ENCODE measurements at regions of chr15 and their contacts with region 1.

Region 1: DNA sequence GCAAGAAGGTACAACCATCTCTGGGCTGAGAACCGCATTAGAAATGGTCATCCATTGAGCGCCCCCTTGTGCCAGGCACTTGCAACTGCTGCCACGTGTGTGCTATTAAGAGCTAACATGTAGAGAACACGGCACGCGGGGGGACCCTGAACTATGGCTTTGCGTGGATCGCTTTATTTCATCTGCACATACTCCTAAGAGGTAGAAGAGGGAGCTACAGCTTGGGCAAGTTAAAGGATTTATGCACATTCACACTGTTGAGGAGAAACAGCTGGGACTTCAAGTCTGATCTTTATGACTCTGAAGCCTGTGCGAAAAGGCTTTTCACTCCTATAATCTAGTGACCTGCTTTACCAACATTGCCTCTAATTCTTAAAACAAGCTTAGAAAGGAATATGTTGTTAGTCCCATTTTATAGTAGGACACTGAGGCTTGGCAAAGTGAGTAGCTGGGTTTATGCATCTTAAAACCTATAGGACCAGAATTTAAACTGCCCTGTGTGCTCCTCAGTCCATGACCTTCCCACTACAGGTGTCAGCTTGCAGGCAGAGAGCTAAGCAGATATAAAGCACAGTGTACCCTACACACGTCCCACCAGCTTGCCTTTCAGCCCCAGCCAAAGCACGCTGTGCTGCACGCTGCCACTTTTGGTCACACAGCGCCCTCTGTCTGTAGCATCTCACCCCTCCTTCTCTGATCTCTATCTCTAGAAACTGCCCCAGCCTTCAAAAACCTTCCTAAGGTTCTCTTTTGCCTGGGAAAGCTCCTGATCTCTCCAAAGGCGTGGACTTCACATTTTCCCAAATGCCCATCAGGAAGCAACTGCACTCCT is 57.8 kb downstream of the STARD5 start:
- DNase-seq: peak; percentile 82
- H3K4me3 ChIP-seq: peak overlapping the region; percentile 9 to 51; a peak in 2 of 4 replicates
- H3K27ac ChIP-seq: no peak overlapping the region
- H3K4me1 ChIP-seq: peaks cover 5 to 11% of the 10 kb centered on the region in 2 experiments; a peak in 2 of 4 replicates
- H3K27me3 ChIP-seq: peaks cover 10% of the 10 kb centered on the region; the same call in 1 of the 2 replicates
- CTCF ChIP-seq: peak; percentile 84
- EP300 ChIP-seq: no peak
- RAD21 ChIP-seq: peak; percentile 95

Region 2: GRCh38 chr15:80776420-80777045 is 489.6 kb before region 1 on chr15:
- CTCF ChIA-PET with region 1: interaction called, 12 read pairs
- POLR2A ChIA-PET with region 1: no interaction called
- DNase-seq: peak; percentile 76
- H3K4me3 ChIP-seq: peak overlapping the region in 1 of 2 experiments; percentile 13; a peak in 1 of 4 replicates
- H3K27ac ChIP-seq: peak overlapping the region in 1 of 2 experiments; percentile 72; a peak in 2 of 4 replicates
- H3K4me1 ChIP-seq: peaks cover 0 to 27% of the 10 kb centered on the region in 2 experiments; a peak in 3 of 4 replicates
- H3K27me3 ChIP-seq: no peaks in the 10 kb centered on the region
- CTCF ChIP-seq: peak; percentile 88
- EP300 ChIP-seq: no peak
- RAD21 ChIP-seq: peak; percentile 90

Region 3: DNA sequence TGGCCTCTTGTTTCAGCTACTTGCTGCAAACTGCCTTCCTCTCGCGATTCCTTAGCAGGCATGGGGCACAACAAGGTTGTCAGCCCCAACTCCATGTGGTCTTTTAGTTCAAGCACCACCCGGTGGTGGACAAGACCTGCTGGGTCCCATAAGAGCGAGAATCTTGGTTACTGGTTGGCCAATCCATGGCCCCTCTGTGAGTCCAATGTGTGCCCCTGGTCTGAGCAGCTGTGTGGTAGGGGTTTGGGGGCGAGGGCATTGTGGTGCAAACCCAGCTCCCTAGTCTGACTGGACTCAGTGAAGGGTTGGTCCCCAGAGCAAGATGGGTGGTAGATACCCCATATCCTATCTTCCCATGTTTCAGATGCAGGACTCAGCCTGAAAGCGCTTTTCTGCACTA is 325.3 kb before region 1 on chr15:
- CTCF ChIA-PET with region 1: no interaction called
- POLR2A ChIA-PET with region 1: no interaction called
- DNase-seq: no peak
- H3K4me3 ChIP-seq: no peak overlapping the region
- H3K27ac ChIP-seq: no peak overlapping the region
- H3K4me1 ChIP-seq: no peaks in the 10 kb centered on the region; a peak in 1 of 4 replicates
- H3K27me3 ChIP-seq: no peaks in the 10 kb centered on the region
- CTCF ChIP-seq: no peak
- EP300 ChIP-seq: no peak
- RAD21 ChIP-seq: no peak

Region 4: DNA sequence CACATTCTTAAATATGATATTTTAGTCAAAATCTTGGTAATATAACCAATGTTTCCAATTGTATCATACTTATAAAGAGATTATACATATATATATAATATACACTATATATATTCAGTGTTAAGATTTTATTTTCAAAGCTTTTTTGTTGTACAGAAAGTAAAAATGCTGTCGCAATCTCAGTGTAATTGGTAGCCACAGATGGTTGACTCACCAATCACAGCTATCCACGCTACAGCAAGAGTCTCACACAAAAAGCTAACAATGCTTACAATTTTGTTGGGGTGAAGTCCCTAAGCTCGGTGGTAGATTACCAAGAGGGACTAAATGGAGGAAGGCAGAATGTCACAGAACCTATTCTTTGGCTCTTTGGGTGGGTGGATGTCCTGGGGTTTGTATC is 149.0 kb before region 1 on chr15:
- CTCF ChIA-PET with region 1: interaction called, 451 read pairs
- POLR2A ChIA-PET with region 1: no interaction called
- DNase-seq: no peak
- H3K4me3 ChIP-seq: no peak overlapping the region
- H3K27ac ChIP-seq: no peak overlapping the region
- H3K4me1 ChIP-seq: no peaks in the 10 kb centered on the region; a peak in 1 of 4 replicates
- H3K27me3 ChIP-seq: no peaks in the 10 kb centered on the region; the same call in 1 of the 2 replicates
- CTCF ChIP-seq: no peak
- EP300 ChIP-seq: no peak
- RAD21 ChIP-seq: no peak

Region 5: GRCh38 chr15:81163961-81164800 is 102.0 kb before region 1 on chr15:
- CTCF ChIA-PET with region 1: interaction called, 395 read pairs
- POLR2A ChIA-PET with region 1: interaction called, 8 read pairs
- DNase-seq: no peak
- H3K4me3 ChIP-seq: no peak overlapping the region
- H3K27ac ChIP-seq: no peak overlapping the region
- H3K4me1 ChIP-seq: peaks cover 0 to 19% of the 10 kb centered on the region in 2 experiments; a peak in 2 of 4 replicates
- H3K27me3 ChIP-seq: no peaks in the 10 kb centered on the region
- CTCF ChIP-seq: 0 out of 2 replicates have a peak, but pooled peaks have one; percentile 8
- EP300 ChIP-seq: no peak
- RAD21 ChIP-seq: 0 out of 2 replicates have a peak, but pooled peaks have one; percentile 26

Region 6: GRCh38 chr15:81225161-81225671 is 40.9 kb before region 1 on chr15:
- CTCF ChIA-PET with region 1: interaction called, 12 read pairs
- POLR2A ChIA-PET with region 1: no interaction called
- DNase-seq: no peak
- H3K4me3 ChIP-seq: no peak overlapping the region
- H3K27ac ChIP-seq: no peak overlapping the region
- H3K4me1 ChIP-seq: peaks cover 0 to 3% of the 10 kb centered on the region in 2 experiments; a peak in 1 of 4 replicates
- H3K27me3 ChIP-seq: no peaks in the 10 kb centered on the region
- CTCF ChIP-seq: no peak
- EP300 ChIP-seq: no peak
- RAD21 ChIP-seq: no peak

Region 7: GRCh38 chr15:81342561-81342960 is 76.4 kb after region 1 on chr15:
- CTCF ChIA-PET with region 1: interaction called, 28 read pairs
- POLR2A ChIA-PET with region 1: no interaction called
- DNase-seq: no peak
- H3K4me3 ChIP-seq: no peak overlapping the region
- H3K27ac ChIP-seq: no peak overlapping the region
- H3K4me1 ChIP-seq: peaks cover 0 to 12% of the 10 kb centered on the region in 2 experiments; a peak in 2 of 4 replicates
- H3K27me3 ChIP-seq: no peaks in the 10 kb centered on the region; the same call in 1 of the 2 replicates
- CTCF ChIP-seq: no peak
- EP300 ChIP-seq: no peak
- RAD21 ChIP-seq: no peak

Region 8: GRCh38 chr15:81394603-81395002 is 128.4 kb after region 1 on chr15:
- CTCF ChIA-PET with region 1: interaction called, 173 read pairs
- POLR2A ChIA-PET with region 1: no interaction called
- DNase-seq: no peak
- H3K4me3 ChIP-seq: no peak overlapping the region
- H3K27ac ChIP-seq: no peak overlapping the region
- H3K4me1 ChIP-seq: no peaks in the 10 kb centered on the region
- H3K27me3 ChIP-seq: peaks cover 3% of the 10 kb centered on the region; the same call in 1 of the 2 replicates
- CTCF ChIP-seq: no peak
- EP300 ChIP-seq: no peak
- RAD21 ChIP-seq: no peak

Region 9: DNA sequence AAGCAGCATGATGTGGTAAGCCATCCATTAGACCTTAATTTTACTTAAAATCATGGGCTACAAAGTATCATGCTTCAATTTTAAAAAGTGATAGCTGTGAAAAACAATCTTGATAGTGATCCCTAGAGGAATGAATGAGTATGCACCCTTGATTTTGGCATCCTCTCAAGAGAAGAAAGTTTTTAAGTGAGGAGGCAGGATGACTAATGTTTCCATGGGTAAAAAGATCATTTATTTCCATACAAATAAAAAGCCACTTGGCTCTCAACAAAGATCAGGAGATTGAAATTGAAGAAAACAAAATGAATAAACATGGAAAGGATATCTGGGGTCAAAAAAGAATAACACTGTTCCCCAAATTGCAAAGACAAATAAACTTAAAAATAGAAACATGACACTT is 474.3 kb after region 1 on chr15:
- CTCF ChIA-PET with region 1: no interaction called
- POLR2A ChIA-PET with region 1: no interaction called
- DNase-seq: no peak
- H3K4me3 ChIP-seq: no peak overlapping the region
- H3K27ac ChIP-seq: no peak overlapping the region
- H3K4me1 ChIP-seq: no peaks in the 10 kb centered on the region
- H3K27me3 ChIP-seq: no peaks in the 10 kb centered on the region
- CTCF ChIP-seq: no peak
- EP300 ChIP-seq: no peak
- RAD21 ChIP-seq: no peak